ENCODE measurements at regions of chr12 and their contacts with region 1.

Region 1: GRCh38 chr12:19915392-19916195 is 452.7 kb upstream of the PDE3A start:
- DNase-seq: no peak
- ATAC-seq: peak; percentile 88
- H3K4me3 ChIP-seq: no peak overlapping the region
- H3K27ac ChIP-seq: no peak overlapping the region
- H3K4me1 ChIP-seq: no peaks in the 10 kb centered on the region
- H3K27me3 ChIP-seq: no peaks in the 10 kb centered on the region
- CTCF ChIP-seq: peak; percentile 28 to 72 (median 43); a peak in 4 of 6 replicates
- EP300 ChIP-seq: peak; percentile 30 to 57; a peak in 2 of 4 replicates
- POLR2A ChIP-seq: no peak
- RAD21 ChIP-seq: peak; percentile 70

Region 2: GRCh38 chr12:19739183-19739776 is 176.3 kb before region 1 on chr12:
- CTCF ChIA-PET with region 1: interaction called, 16 read pairs
- POLR2A ChIA-PET with region 1: interaction called, 3 read pairs
- RAD21 ChIA-PET with region 1: interaction called, 12 read pairs
- SMC1A ChIA-PET with region 1: interaction called, 8 read pairs
- in situ Hi-C with region 1: no loop called
- intact Hi-C with region 1: loop called (anchors 5 kb)
- DNase-seq: peak; percentile 16
- ATAC-seq: peak; percentile 70
- H3K4me3 ChIP-seq: no peak overlapping the region
- H3K27ac ChIP-seq: no peak overlapping the region
- H3K4me1 ChIP-seq: no peaks in the 10 kb centered on the region
- H3K27me3 ChIP-seq: no peaks in the 10 kb centered on the region
- CTCF ChIP-seq: peak; percentile 47 to 62 (median 53)
- EP300 ChIP-seq: no peak
- POLR2A ChIP-seq: no peak
- RAD21 ChIP-seq: peak; percentile 75

Region 3: DNA sequence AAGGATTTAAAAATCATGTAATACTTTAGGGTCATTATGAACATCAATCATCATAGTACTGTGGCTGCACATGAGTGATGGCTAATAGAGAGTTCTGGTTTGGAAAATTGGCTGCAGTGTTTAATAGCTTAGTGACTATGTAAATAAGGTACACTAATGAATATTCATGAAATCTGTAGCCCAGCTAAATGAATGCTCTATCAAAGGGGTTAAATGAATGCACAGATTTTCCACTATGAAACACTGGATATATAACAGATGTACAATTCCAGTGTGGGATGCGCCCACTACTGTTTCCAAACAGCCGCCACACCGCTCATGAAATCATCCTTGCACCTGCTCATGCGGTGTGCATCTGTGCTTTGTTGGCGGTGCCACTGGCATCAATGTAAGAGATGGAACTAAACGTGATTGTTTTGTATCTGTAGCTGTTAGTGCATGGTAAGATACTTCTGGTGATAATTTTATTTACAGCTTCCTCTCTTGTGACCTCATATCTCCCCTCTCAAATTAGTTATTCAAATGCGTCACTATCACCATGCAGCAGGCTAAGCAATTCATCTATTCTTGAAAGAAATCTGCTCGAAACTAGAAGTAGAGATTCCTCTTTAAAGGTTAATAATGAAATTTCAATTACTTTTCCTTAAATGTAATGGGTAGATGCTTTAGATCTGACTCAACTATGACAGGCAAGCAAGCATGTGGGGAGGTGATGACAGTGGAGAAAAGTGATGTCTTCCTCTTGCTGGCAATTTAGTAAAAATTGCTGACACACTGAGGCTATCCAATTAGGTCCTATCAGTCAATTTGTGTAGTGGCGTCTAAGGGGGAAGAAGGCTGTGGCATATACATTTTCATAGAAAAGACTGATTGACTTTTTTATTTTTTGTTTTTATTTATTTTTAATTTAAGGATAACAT is 42.7 kb before region 1 on chr12:
- CTCF ChIA-PET with region 1: no interaction called
- POLR2A ChIA-PET with region 1: no interaction called
- RAD21 ChIA-PET with region 1: no interaction called
- SMC1A ChIA-PET with region 1: no interaction called
- in situ Hi-C with region 1: no loop called
- intact Hi-C with region 1: no loop called
- DNase-seq: no peak
- ATAC-seq: no peak
- H3K4me3 ChIP-seq: no peak overlapping the region
- H3K27ac ChIP-seq: no peak overlapping the region
- H3K4me1 ChIP-seq: no peaks in the 10 kb centered on the region
- H3K27me3 ChIP-seq: no peaks in the 10 kb centered on the region
- CTCF ChIP-seq: no peak
- EP300 ChIP-seq: no peak
- POLR2A ChIP-seq: no peak
- RAD21 ChIP-seq: no peak

Region 4: GRCh38 chr12:19893514-19893913 is 22.1 kb before region 1 on chr12:
- CTCF ChIA-PET with region 1: interaction called, 48 read pairs
- POLR2A ChIA-PET with region 1: no interaction called
- RAD21 ChIA-PET with region 1: interaction called, 26 read pairs
- SMC1A ChIA-PET with region 1: interaction called, 44 read pairs
- in situ Hi-C with region 1: no loop called
- intact Hi-C with region 1: no loop called
- DNase-seq: no peak
- ATAC-seq: peak; percentile 42
- H3K4me3 ChIP-seq: no peak overlapping the region
- H3K27ac ChIP-seq: no peak overlapping the region
- H3K4me1 ChIP-seq: no peaks in the 10 kb centered on the region
- H3K27me3 ChIP-seq: no peaks in the 10 kb centered on the region
- CTCF ChIP-seq: peak in 1 of 3 experiments; percentile 41; a peak in 2 of 6 replicates
- EP300 ChIP-seq: no peak
- POLR2A ChIP-seq: no peak
- RAD21 ChIP-seq: peak; percentile 51

Region 5: GRCh38 chr12:19953734-19954133 is 38.1 kb after region 1 on chr12:
- CTCF ChIA-PET with region 1: no interaction called
- POLR2A ChIA-PET with region 1: no interaction called
- RAD21 ChIA-PET with region 1: no interaction called
- SMC1A ChIA-PET with region 1: no interaction called
- in situ Hi-C with region 1: no loop called
- intact Hi-C with region 1: no loop called
- DNase-seq: no peak
- ATAC-seq: no peak
- H3K4me3 ChIP-seq: no peak overlapping the region
- H3K27ac ChIP-seq: no peak overlapping the region
- H3K4me1 ChIP-seq: no peaks in the 10 kb centered on the region
- H3K27me3 ChIP-seq: no peaks in the 10 kb centered on the region
- CTCF ChIP-seq: no peak
- EP300 ChIP-seq: no peak
- POLR2A ChIP-seq: no peak
- RAD21 ChIP-seq: no peak

Region 6: DNA sequence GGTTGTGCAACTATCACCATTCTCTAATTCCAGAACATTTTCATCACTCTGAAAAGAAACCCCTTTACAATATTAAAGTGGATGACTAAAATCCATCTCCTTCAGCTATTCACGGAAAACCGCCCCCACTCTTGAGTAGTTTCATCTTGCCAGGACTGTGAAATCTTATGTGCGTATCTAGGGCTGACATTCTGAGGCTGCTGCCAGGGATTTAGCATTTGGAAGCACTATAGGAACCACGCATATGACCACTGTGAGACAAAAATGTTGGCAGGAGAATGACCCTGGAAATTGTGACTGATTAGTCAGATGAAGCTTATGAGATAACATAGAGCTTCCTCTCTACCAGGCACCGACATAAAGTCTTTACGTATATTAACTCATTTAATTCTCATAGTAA is 147.5 kb after region 1 on chr12:
- CTCF ChIA-PET with region 1: no interaction called
- POLR2A ChIA-PET with region 1: no interaction called
- RAD21 ChIA-PET with region 1: no interaction called
- SMC1A ChIA-PET with region 1: no interaction called
- in situ Hi-C with region 1: no loop called
- intact Hi-C with region 1: loop called (anchors 5 kb)
- DNase-seq: no peak
- ATAC-seq: no peak
- H3K4me3 ChIP-seq: no peak overlapping the region
- H3K27ac ChIP-seq: no peak overlapping the region
- H3K4me1 ChIP-seq: no peaks in the 10 kb centered on the region
- H3K27me3 ChIP-seq: no peaks in the 10 kb centered on the region
- CTCF ChIP-seq: no peak
- EP300 ChIP-seq: no peak
- POLR2A ChIP-seq: no peak
- RAD21 ChIP-seq: no peak

Region 7: DNA sequence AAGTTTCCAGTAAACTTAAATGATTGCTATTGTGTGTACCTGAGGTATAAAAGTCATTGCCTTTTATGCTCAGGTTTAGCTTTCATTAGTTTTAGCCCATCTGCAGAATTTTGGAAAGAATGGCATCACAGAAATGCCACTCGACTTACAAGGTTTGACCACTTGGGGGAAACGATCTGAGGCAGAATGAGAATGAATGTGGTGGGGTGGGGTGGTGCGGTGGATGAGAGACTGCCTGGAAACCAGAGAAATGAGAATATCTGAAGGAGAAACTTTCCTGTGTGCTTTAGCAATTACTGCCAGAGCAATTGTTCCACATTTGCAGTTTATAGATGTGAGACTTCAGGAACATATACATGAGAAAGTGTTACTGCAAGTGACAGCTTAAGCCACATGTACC is 227.4 kb after region 1 on chr12:
- CTCF ChIA-PET with region 1: interaction called, 6 read pairs
- POLR2A ChIA-PET with region 1: no interaction called
- RAD21 ChIA-PET with region 1: no interaction called
- SMC1A ChIA-PET with region 1: no interaction called
- in situ Hi-C with region 1: no loop called
- intact Hi-C with region 1: loop called (anchors 5 kb)
- DNase-seq: no peak
- ATAC-seq: peak; percentile 75
- H3K4me3 ChIP-seq: no peak overlapping the region
- H3K27ac ChIP-seq: no peak overlapping the region
- H3K4me1 ChIP-seq: 0 out of 2 replicates have a peak, but pooled peaks cover 2% of the 10 kb centered on the region
- H3K27me3 ChIP-seq: no peaks in the 10 kb centered on the region
- CTCF ChIP-seq: no peak; a peak in 1 of 6 replicates
- EP300 ChIP-seq: no peak
- POLR2A ChIP-seq: no peak
- RAD21 ChIP-seq: 0 out of 2 replicates have a peak, but pooled peaks have one; percentile 28

Region 8: GRCh38 chr12:20220339-20220738 is 304.7 kb after region 1 on chr12:
- CTCF ChIA-PET with region 1: interaction called, 47 read pairs
- POLR2A ChIA-PET with region 1: no interaction called
- RAD21 ChIA-PET with region 1: interaction called, 14 read pairs
- SMC1A ChIA-PET with region 1: interaction called, 27 read pairs
- in situ Hi-C with region 1: no loop called
- intact Hi-C with region 1: loop called (anchors 1 kb)
- DNase-seq: peak; percentile 5
- ATAC-seq: peak; percentile 87
- H3K4me3 ChIP-seq: no peak overlapping the region
- H3K27ac ChIP-seq: no peak overlapping the region
- H3K4me1 ChIP-seq: no peaks in the 10 kb centered on the region
- H3K27me3 ChIP-seq: no peaks in the 10 kb centered on the region
- CTCF ChIP-seq: peak; percentile 15 to 44 (median 35); a peak in 4 of 6 replicates
- EP300 ChIP-seq: no peak
- POLR2A ChIP-seq: no peak
- RAD21 ChIP-seq: peak; percentile 61

Region 9: GRCh38 chr12:20376984-20377383 is 461.4 kb after region 1 on chr12:
- CTCF ChIA-PET with region 1: interaction called, 5 read pairs
- POLR2A ChIA-PET with region 1: no interaction called
- RAD21 ChIA-PET with region 1: interaction called, 3 read pairs
- SMC1A ChIA-PET with region 1: interaction called, 3 read pairs
- in situ Hi-C with region 1: no loop called
- intact Hi-C with region 1: loop called (anchors 5 kb)
- DNase-seq: no peak
- ATAC-seq: peak; percentile 44
- H3K4me3 ChIP-seq: no peak overlapping the region
- H3K27ac ChIP-seq: no peak overlapping the region
- H3K4me1 ChIP-seq: no peaks in the 10 kb centered on the region
- H3K27me3 ChIP-seq: no peaks in the 10 kb centered on the region
- CTCF ChIP-seq: peak in 1 of 3 experiments; percentile 36; a peak in 1 of 6 replicates
- EP300 ChIP-seq: no peak
- POLR2A ChIP-seq: no peak
- RAD21 ChIP-seq: peak; percentile 60

Measured in GM12878 (cell line).